PC-3 (cell line): ENCODE measurements at regions of chr3 and their contacts with region 1.

Region 1: GRCh38 chr3:194497821-194498598 is 11.2 kb upstream of the ATP13A3 start:
- DNase-seq: peak; percentile 90
- ATAC-seq: peak; percentile 80
- H3K4me3 ChIP-seq: peak overlapping the region; percentile 8; the same call in 1 of the 2 replicates
- H3K27ac ChIP-seq: peak overlapping the region; percentile 53
- H3K4me1 ChIP-seq: peaks cover 45% of the 10 kb centered on the region
- H3K27me3 ChIP-seq: no peaks in the 10 kb centered on the region
- CTCF ChIP-seq: no peak

Region 2: GRCh38 chr3:194486540-194487288 is 11.3 kb before region 1 on chr3 and contains the start of gene ATP13A3:
- CTCF ChIA-PET with region 1: no interaction called
- POLR2A ChIA-PET with region 1: no interaction called
- intact Hi-C with region 1: loop called (anchors 1 kb)
- DNase-seq: peak; percentile 91
- ATAC-seq: peak; percentile 74
- H3K4me3 ChIP-seq: peak within 1 kb of the TSS; percentile 92
- H3K27ac ChIP-seq: peak within 1 kb of the TSS; percentile 24
- H3K4me1 ChIP-seq: peaks cover 33% of the 10 kb centered on the region
- H3K27me3 ChIP-seq: no peaks in the 10 kb centered on the region
- CTCF ChIP-seq: no peak
- total RNA-seq, gene ATP13A3: 69.4 and 101 TPM in 2 replicates

Region 3: GRCh38 chr3:194527726-194528125 is 29.7 kb after region 1 on chr3:
- CTCF ChIA-PET with region 1: no interaction called
- POLR2A ChIA-PET with region 1: interaction called, 5 read pairs
- intact Hi-C with region 1: loop called (anchors 1 kb)
- DNase-seq: no peak
- ATAC-seq: no peak
- H3K4me3 ChIP-seq: no peak overlapping the region; the same call in 1 of the 2 replicates
- H3K27ac ChIP-seq: peak overlapping the region; percentile 94
- H3K4me1 ChIP-seq: peaks cover 13% of the 10 kb centered on the region
- H3K27me3 ChIP-seq: no peaks in the 10 kb centered on the region
- CTCF ChIP-seq: no peak

Region 4: DNA sequence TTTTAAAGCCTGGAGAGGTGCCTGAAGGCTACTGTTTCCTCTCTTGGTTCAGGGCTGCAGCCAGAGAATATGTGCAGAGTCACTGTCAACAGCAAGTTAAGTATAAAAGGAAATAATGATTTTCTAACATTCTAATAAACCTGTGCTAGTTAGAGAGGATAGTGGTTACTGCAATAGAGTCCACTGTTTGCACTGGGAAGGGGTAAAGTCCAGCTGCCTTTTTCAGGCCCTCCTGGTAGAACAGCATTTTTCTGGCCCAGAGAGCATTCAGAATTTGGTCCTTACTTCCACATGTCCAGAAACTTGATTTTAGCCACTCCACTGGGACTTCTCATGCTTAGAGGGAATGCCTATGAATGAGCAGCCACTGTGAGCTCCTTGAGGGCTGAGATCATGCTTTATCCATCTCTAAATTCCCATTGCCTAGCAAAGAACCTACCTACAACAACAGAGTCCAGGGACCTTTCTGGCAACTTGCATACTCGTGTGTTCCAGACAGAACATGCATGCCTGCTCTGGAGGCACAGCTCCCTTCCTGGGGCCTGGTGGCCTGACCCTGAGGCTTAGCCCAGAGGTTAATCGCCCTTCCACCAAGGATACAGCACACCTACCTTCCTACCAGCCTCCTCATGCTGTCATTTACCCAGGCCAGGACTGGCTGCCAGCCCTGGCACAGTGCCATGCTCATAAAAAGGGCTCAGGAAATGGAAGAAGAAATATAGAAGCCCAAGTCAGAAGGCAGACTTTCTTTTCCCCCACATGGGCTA is 39.0 kb after region 1 on chr3:
- CTCF ChIA-PET with region 1: no interaction called
- POLR2A ChIA-PET with region 1: no interaction called
- intact Hi-C with region 1: loop called (anchors 1 kb)
- DNase-seq: peak; percentile 91
- ATAC-seq: peak; percentile 80
- H3K4me3 ChIP-seq: peak overlapping the region; percentile 15; the same call in 1 of the 2 replicates
- H3K27ac ChIP-seq: peak overlapping the region; percentile 69
- H3K4me1 ChIP-seq: peaks cover 15% of the 10 kb centered on the region
- H3K27me3 ChIP-seq: no peaks in the 10 kb centered on the region
- CTCF ChIP-seq: no peak